CD4-positive, alpha-beta memory T cell (primary cell): ENCODE measurements at regions of chr9 and their contacts with region 1.

Region 1: DNA sequence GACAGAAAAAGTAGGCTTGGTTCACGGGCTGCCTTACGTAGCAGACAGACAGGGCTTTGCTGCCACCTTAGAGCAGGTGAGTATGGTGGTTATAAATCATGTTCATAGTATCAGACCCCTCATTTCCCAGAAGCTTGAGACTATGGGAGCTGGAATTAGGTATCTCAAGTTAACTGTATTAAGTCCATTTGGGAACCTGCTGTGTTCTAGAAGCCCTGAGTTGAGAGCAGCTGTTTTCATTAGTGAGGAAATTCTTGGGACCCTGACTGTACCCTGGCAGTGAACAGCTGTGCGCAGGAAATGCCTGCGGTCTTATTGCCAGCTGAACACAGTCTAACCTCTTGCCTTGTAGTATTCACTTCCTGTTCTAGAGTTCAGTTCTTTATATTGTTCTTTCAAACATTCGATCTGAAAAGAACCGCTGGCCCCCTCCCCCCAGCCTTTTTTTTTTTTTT is 29.8 kb downstream of the UGCG start:
- DNase-seq: peak; percentile 71 to 79 (median 78)
- H3K4me3 ChIP-seq: no peak overlapping the region
- H3K4me3 Mint-ChIP-seq: peak overlapping the region; percentile 45 to 85 (median 79)
- H3K27ac ChIP-seq: peak overlapping the region; percentile 24
- H3K27ac Mint-ChIP-seq: peak overlapping the region; percentile 63 to 95 (median 86)
- H3K4me1 ChIP-seq: peaks cover 50% of the 10 kb centered on the region
- H3K4me1 Mint-ChIP-seq: peaks cover 26 to 50% (median 36%) of the 10 kb centered on the region in 4 donors
- H3K27me3 ChIP-seq: no peaks in the 10 kb centered on the region
- H3K27me3 Mint-ChIP-seq: no peaks in the 10 kb centered on the region

Region 2: DNA sequence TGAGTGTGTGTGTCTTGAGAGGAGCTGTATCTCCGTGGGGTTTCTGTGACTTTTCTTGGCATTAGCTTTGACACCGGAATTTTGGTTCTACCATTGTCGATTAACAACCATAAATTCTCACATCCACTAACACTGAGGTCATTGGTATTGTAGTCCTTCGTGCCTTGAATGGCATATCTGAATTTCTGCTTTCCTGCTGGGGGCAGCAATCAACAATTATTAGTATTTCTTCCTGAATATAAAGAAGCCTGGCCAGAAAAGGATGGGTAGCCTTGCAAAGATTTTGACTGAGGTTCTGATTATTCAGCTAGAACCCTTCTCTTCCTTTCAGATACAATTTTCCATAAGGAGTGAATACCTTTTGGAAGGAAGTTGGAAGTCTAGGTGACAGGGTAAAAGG is 98.3 kb before region 1 on chr9:
- CTCF ChIA-PET with region 1: interaction called, 4 read pairs
- POLR2A ChIA-PET with region 1: no interaction called
- intact Hi-C with region 1: loop called (anchors 1 kb)
- DNase-seq: peak in 4 of 5 donors; percentile 14 to 31 (median 24)
- H3K4me3 ChIP-seq: no peak overlapping the region
- H3K4me3 Mint-ChIP-seq: no peak overlapping the region
- H3K27ac ChIP-seq: no peak overlapping the region
- H3K27ac Mint-ChIP-seq: peak overlapping the region in 1 of 7 donors; percentile 32
- H3K4me1 ChIP-seq: no peaks in the 10 kb centered on the region
- H3K4me1 Mint-ChIP-seq: peaks cover 0 to 1% (median 0%) of the 10 kb centered on the region in 4 donors
- H3K27me3 ChIP-seq: no peaks in the 10 kb centered on the region
- H3K27me3 Mint-ChIP-seq: no peaks in the 10 kb centered on the region

Region 3: GRCh38 chr9:111902396-111903147 is 23.9 kb before region 1 on chr9:
- CTCF ChIA-PET with region 1: interaction called, 4 read pairs
- POLR2A ChIA-PET with region 1: interaction called, 92 read pairs
- intact Hi-C with region 1: loop called (anchors 1 kb)
- DNase-seq: no peak
- H3K4me3 ChIP-seq: no peak overlapping the region
- H3K4me3 Mint-ChIP-seq: peak overlapping the region in 2 of 8 donors; percentile 13 to 26
- H3K27ac ChIP-seq: no peak overlapping the region
- H3K27ac Mint-ChIP-seq: peak overlapping the region in 1 of 7 donors; percentile 18
- H3K4me1 ChIP-seq: peaks cover 90% of the 10 kb centered on the region
- H3K4me1 Mint-ChIP-seq: peaks cover 33 to 42% (median 38%) of the 10 kb centered on the region in 4 donors
- H3K27me3 ChIP-seq: no peaks in the 10 kb centered on the region
- H3K27me3 Mint-ChIP-seq: no peaks in the 10 kb centered on the region

Region 4: GRCh38 chr9:111937781-111938426 is 11.5 kb after region 1 on chr9:
- CTCF ChIA-PET with region 1: interaction called, 4 read pairs
- POLR2A ChIA-PET with region 1: interaction called, 45 read pairs
- intact Hi-C with region 1: no loop called
- DNase-seq: peak; percentile 56 to 79 (median 60)
- H3K4me3 ChIP-seq: peak overlapping the region in 1 of 2 donors; percentile 42
- H3K4me3 Mint-ChIP-seq: peak overlapping the region; percentile 57 to 93 (median 82)
- H3K27ac ChIP-seq: peak overlapping the region; percentile 39
- H3K27ac Mint-ChIP-seq: peak overlapping the region; percentile 74 to 97 (median 96)
- H3K4me1 ChIP-seq: peaks cover 31% of the 10 kb centered on the region
- H3K4me1 Mint-ChIP-seq: peaks cover 25 to 41% (median 33%) of the 10 kb centered on the region in 4 donors
- H3K27me3 ChIP-seq: no peaks in the 10 kb centered on the region
- H3K27me3 Mint-ChIP-seq: no peaks in the 10 kb centered on the region

Region 5: GRCh38 chr9:112037281-112038016 is 111.0 kb after region 1 on chr9:
- CTCF ChIA-PET with region 1: interaction called, 3 read pairs
- POLR2A ChIA-PET with region 1: interaction called, 6 read pairs
- intact Hi-C with region 1: loop called (anchors 1 kb)
- DNase-seq: peak; percentile 83 to 90 (median 84)
- H3K4me3 ChIP-seq: peak overlapping the region in 1 of 2 donors; percentile 28
- H3K4me3 Mint-ChIP-seq: peak overlapping the region; percentile 46 to 90 (median 68)
- H3K27ac ChIP-seq: no peak overlapping the region
- H3K27ac Mint-ChIP-seq: peak overlapping the region in 6 of 7 donors; percentile 31 to 90 (median 72)
- H3K4me1 ChIP-seq: peaks cover 56% of the 10 kb centered on the region
- H3K4me1 Mint-ChIP-seq: peaks cover 36 to 73% (median 52%) of the 10 kb centered on the region in 4 donors
- H3K27me3 ChIP-seq: no peaks in the 10 kb centered on the region
- H3K27me3 Mint-ChIP-seq: no peaks in the 10 kb centered on the region

Region 6: DNA sequence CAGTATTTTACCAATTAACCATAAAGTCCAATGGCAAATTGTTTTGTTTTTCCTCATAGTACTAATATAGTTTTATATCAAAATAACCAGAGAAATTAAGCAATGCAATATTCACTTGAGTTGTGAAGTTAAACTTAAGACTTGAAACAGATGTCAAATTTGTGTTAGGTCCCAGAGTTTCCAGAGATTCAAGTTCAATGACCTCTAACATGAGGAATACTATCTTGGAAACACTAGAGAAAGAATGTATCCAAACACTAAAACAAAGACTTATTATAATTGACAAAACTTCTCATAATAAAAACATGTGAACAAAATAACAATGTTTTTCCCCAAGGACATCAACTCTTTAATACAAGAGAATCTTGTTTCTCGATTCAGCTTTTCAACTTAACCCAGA is 230.6 kb after region 1 on chr9:
- CTCF ChIA-PET with region 1: no interaction called
- POLR2A ChIA-PET with region 1: no interaction called
- intact Hi-C with region 1: no loop called
- DNase-seq: no peak
- H3K4me3 ChIP-seq: no peak overlapping the region
- H3K4me3 Mint-ChIP-seq: no peak overlapping the region
- H3K27ac ChIP-seq: no peak overlapping the region
- H3K27ac Mint-ChIP-seq: peak overlapping the region in 2 of 7 donors; percentile 2 to 16
- H3K4me1 ChIP-seq: no peaks in the 10 kb centered on the region
- H3K4me1 Mint-ChIP-seq: peaks cover 0 to 5% (median 2%) of the 10 kb centered on the region in 4 donors
- H3K27me3 ChIP-seq: no peaks in the 10 kb centered on the region
- H3K27me3 Mint-ChIP-seq: no peaks in the 10 kb centered on the region